ENCODE measurements at regions of chr20 and their contacts with region 1.

Region 1: DNA sequence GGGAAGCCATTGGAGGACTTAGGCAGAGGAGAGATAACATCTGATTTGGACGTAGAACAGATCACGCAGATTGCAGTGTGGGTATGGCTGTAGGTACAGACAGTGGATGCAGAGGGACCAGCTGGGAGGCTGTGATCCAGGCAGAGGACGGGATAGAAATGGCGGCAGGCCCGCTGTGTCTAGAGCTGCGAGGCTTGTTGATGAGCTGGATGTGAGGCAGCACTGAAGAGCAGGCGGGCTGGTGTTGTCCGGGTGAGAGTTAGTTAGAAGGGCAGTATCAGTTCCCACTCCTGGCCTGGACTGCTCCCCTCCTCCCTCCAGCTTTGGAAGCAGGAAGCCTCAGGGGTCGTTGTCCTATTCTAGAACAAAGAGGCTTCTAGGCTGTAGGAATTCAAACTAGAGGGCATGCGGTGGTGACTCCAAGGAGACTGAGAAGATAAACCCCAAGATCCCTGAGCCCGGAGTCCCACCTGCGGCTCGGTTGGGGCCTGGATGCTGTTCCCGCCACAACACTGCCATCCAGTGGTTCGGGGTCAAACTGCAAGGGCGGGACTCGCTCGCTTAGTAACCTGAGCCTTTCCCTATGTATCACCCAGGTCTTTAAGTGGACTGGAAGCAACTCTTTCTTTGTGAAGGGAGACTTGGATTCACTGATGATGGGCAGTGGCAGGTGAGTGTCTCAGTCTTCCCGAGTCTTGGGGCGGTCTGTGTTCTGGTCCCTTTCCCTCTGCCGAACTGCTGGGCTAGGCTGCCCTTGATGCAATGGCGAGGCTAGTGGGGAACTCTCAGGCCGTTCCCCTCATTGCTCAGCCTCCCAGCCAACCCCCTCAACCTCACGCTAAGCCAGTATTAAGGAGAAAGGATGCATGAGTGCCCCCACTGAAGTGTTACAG is 11.2 kb downstream of the TLDC2 start:
- DNase-seq: peak; percentile 56
- ATAC-seq: peak; percentile 95
- H3K4me3 ChIP-seq: no peak overlapping the region
- H3K27ac ChIP-seq: 0 out of 2 replicates have a peak overlapping the region, but pooled peaks have one; percentile 9
- H3K4me1 ChIP-seq: peaks cover 9% of the 10 kb centered on the region
- H3K27me3 ChIP-seq: no peaks in the 10 kb centered on the region
- CTCF ChIP-seq: peak; percentile 97 to 99 (median 98)
- EP300 ChIP-seq: no peak
- POLR2A ChIP-seq: no peak
- RAD21 ChIP-seq: peak; percentile 96

Region 2: DNA sequence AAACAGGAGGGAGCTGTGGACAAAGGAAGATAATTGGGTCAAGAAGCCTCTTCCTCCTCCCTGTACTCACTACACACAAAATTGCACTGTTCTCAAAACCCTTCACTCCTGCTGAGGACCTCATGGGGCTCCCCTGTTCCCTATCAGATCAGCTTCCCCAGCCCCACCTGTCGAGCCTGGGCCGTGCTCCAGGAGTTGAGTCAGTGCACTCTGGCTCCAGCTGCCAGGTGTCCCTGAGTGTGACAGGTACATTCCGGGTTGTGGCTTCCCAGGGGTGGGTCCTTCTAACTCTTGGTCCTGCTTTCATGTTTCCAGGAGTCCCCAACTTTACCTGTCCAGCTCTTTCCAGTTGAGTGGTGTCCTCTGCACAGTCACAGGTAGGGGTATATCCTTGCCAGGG is 273.1 kb before region 1 on chr20:
- CTCF ChIA-PET with region 1: interaction called, 36 read pairs
- POLR2A ChIA-PET with region 1: interaction called, 3 read pairs
- RAD21 ChIA-PET with region 1: interaction called, 6 read pairs
- SMC1A ChIA-PET with region 1: interaction called, 10 read pairs
- in situ Hi-C with region 1: loop called (anchors 5 kb)
- intact Hi-C with region 1: loop called (anchors 1 kb)
- DNase-seq: no peak
- ATAC-seq: no peak
- H3K4me3 ChIP-seq: no peak overlapping the region
- H3K27ac ChIP-seq: no peak overlapping the region
- H3K4me1 ChIP-seq: no peaks in the 10 kb centered on the region
- H3K27me3 ChIP-seq: no peaks in the 10 kb centered on the region
- CTCF ChIP-seq: no peak
- EP300 ChIP-seq: no peak
- POLR2A ChIP-seq: peak; percentile 35; the same call in 1 of the 2 replicates
- RAD21 ChIP-seq: no peak

Region 3: DNA sequence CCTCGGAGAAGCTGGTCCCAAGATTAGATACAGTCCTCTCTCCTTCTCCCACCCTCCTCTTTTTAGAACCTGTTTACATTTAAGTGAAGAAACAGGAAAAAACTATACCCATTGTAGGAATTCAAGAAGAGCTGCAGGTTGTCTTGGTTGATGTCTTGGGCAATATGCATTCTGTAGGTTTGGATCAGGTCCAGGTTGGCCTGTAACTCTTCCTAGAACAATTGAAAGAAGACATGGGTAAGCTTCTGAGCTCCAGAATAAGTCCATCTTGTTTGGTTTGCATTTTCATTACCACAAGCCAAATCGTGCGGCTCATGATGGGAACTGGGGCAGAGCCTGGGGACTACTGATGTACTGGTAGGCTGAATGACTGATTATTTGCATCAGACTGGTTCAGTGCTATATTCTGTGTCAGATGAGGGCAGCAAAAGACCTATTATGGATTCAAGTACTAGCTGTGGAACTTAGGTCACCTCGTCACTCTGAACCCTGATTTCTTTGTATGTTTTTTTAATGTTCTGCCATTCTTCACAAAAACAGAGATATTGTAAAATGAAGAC is 220.8 kb before region 1 on chr20:
- CTCF ChIA-PET with region 1: interaction called, 10 read pairs
- POLR2A ChIA-PET with region 1: no interaction called
- RAD21 ChIA-PET with region 1: interaction called, 3 read pairs
- SMC1A ChIA-PET with region 1: no interaction called
- in situ Hi-C with region 1: no loop called
- intact Hi-C with region 1: loop called (anchors 5 kb)
- DNase-seq: no peak
- ATAC-seq: no peak
- H3K4me3 ChIP-seq: no peak overlapping the region
- H3K27ac ChIP-seq: no peak overlapping the region
- H3K4me1 ChIP-seq: no peaks in the 10 kb centered on the region
- H3K27me3 ChIP-seq: no peaks in the 10 kb centered on the region
- CTCF ChIP-seq: peak in 2 of 3 experiments; percentile 14 to 42; a peak in 2 of 6 replicates
- EP300 ChIP-seq: no peak
- POLR2A ChIP-seq: no peak
- RAD21 ChIP-seq: peak; percentile 38; the same call in 1 of the 2 replicates

Region 4: GRCh38 chr20:36754656-36755222 is 132.4 kb before region 1 on chr20:
- CTCF ChIA-PET with region 1: interaction called, 9 read pairs
- POLR2A ChIA-PET with region 1: no interaction called
- RAD21 ChIA-PET with region 1: interaction called, 12 read pairs
- SMC1A ChIA-PET with region 1: interaction called, 9 read pairs
- in situ Hi-C with region 1: no loop called
- intact Hi-C with region 1: no loop called
- DNase-seq: no peak
- ATAC-seq: peak; percentile 85
- H3K4me3 ChIP-seq: no peak overlapping the region
- H3K27ac ChIP-seq: 0 out of 2 replicates have a peak overlapping the region, but pooled peaks have one; percentile 20
- H3K4me1 ChIP-seq: peaks cover 13% of the 10 kb centered on the region
- H3K27me3 ChIP-seq: no peaks in the 10 kb centered on the region
- CTCF ChIP-seq: peak; percentile 77 to 81 (median 79)
- EP300 ChIP-seq: no peak
- POLR2A ChIP-seq: no peak
- RAD21 ChIP-seq: peak; percentile 76

Region 5: DNA sequence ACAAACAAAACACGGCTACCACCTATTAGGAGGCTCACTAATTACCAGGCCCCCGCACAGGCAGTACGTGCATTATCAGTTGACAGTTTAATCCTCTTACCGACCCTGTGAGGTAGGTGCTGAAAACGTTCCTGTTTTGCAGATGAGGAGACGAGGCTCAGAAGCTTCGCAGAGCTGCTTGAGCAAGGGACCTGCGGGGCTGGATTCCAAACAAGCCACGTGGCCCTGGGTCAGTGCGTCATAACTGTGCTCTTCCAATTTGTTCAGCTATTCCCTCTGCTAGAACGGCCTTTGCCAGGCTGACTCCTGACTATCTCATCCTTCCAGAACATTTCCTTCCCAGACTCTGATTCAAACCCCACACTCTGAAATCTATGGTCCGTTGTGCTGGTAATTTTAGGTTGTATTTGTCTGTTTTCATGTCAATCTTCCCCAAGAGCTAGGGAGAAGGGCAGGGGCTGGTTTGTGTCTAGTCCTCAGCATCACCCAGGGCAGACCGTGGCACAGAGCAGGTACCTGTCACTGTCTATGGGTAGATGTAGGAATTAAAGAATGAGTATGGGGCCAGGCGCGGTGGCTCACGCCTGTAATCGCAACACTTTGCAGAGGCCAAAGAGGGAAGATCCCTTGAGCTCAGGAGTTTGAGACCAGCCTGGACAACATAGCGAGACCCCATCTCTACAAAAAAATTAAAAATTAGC is 39.9 kb before region 1 on chr20:
- CTCF ChIA-PET with region 1: interaction called, 16 read pairs
- POLR2A ChIA-PET with region 1: interaction called, 15 read pairs
- RAD21 ChIA-PET with region 1: interaction called, 19 read pairs
- SMC1A ChIA-PET with region 1: interaction called, 22 read pairs
- in situ Hi-C with region 1: no loop called
- intact Hi-C with region 1: no loop called
- DNase-seq: no peak
- ATAC-seq: no peak
- H3K4me3 ChIP-seq: no peak overlapping the region
- H3K27ac ChIP-seq: no peak overlapping the region
- H3K4me1 ChIP-seq: peaks cover 80% of the 10 kb centered on the region
- H3K27me3 ChIP-seq: no peaks in the 10 kb centered on the region
- CTCF ChIP-seq: no peak
- EP300 ChIP-seq: no peak
- POLR2A ChIP-seq: no peak
- RAD21 ChIP-seq: no peak

Region 6: DNA sequence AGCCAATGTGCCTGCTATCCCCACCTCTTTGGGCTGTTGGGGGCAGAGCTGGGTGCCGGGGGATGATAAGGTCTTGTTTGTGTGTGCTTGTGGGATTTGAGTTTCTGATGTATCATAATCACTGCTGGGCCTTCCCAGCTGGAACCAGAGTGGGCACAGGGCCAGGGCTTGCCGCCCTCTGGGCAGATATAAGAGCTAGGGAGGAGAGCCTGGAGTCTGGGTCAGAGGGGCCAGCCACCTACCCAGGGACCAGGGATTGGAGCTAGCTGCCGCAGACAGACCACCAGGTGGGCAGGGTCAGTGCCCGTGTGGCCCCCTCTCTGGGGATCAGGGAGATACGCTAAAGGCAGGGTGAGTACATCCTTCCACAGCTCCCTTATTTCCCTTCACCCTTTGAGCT is 14.3 kb before region 1 on chr20:
- CTCF ChIA-PET with region 1: interaction called, 54 read pairs
- POLR2A ChIA-PET with region 1: interaction called, 20 read pairs
- RAD21 ChIA-PET with region 1: interaction called, 22 read pairs
- SMC1A ChIA-PET with region 1: interaction called, 52 read pairs
- in situ Hi-C with region 1: no loop called
- intact Hi-C with region 1: no loop called
- DNase-seq: no peak
- ATAC-seq: no peak
- H3K4me3 ChIP-seq: no peak overlapping the region
- H3K27ac ChIP-seq: no peak overlapping the region
- H3K4me1 ChIP-seq: peaks cover 37% of the 10 kb centered on the region
- H3K27me3 ChIP-seq: no peaks in the 10 kb centered on the region
- CTCF ChIP-seq: no peak
- EP300 ChIP-seq: no peak
- POLR2A ChIP-seq: no peak
- RAD21 ChIP-seq: no peak

Region 7: DNA sequence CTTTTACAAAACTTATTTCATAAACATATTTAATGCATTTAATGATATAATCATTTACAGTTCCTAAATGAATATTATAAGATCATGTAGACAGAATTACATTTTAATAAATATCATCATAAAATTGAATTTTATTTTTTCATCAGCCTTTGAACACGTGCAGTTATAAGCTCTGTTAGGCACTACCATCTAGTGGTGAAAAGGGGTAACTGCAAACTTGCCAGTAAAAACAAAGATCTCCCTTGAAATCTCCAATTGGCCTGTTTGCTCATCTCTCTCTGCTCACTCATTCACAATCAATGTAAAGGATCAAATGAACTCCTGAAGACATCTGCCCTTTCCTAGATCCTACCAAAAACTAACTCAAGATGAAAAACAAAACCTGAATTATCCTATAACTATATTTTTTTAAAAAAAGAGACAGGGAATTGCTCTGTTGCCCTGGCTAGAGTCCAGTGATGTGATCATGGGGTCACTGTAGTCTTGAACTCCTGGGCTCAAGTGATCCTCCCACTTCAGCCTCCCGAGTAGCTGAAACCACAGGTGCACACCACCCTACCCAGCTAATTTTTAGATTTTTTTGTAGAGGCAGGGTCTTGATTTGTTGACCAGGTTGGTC is 32.7 kb after region 1 on chr20:
- CTCF ChIA-PET with region 1: interaction called, 12 read pairs
- POLR2A ChIA-PET with region 1: no interaction called
- RAD21 ChIA-PET with region 1: interaction called, 6 read pairs
- SMC1A ChIA-PET with region 1: interaction called, 4 read pairs
- in situ Hi-C with region 1: no loop called
- intact Hi-C with region 1: no loop called
- DNase-seq: peak; percentile 13
- ATAC-seq: peak; percentile 79
- H3K4me3 ChIP-seq: no peak overlapping the region
- H3K27ac ChIP-seq: no peak overlapping the region
- H3K4me1 ChIP-seq: no peaks in the 10 kb centered on the region
- H3K27me3 ChIP-seq: no peaks in the 10 kb centered on the region
- CTCF ChIP-seq: peak; percentile 79 to 92 (median 81)
- EP300 ChIP-seq: no peak
- POLR2A ChIP-seq: no peak
- RAD21 ChIP-seq: peak; percentile 82